GM10248 (cell line): ENCODE measurements at regions of chr6 and their contacts with region 1.

Region 1: GRCh38 chr6:158047127-158047518 is 65.5 kb downstream of the SYNJ2 start:
- DNase-seq: no peak
- CTCF ChIP-seq: no peak

Region 2: GRCh38 chr6:158037021-158037420 is 10.1 kb before region 1 on chr6:
- CTCF ChIA-PET with region 1: no interaction called
- POLR2A ChIA-PET with region 1: no interaction called
- DNase-seq: no peak
- CTCF ChIP-seq: no peak

Region 3: GRCh38 chr6:158060455-158061360 is 13.6 kb after region 1 on chr6:
- CTCF ChIA-PET with region 1: interaction called, 10 read pairs
- POLR2A ChIA-PET with region 1: interaction called, 3 read pairs
- DNase-seq: no peak
- CTCF ChIP-seq: no peak